ENCODE measurements at regions of chr15 and their contacts with region 1.

Region 1: DNA sequence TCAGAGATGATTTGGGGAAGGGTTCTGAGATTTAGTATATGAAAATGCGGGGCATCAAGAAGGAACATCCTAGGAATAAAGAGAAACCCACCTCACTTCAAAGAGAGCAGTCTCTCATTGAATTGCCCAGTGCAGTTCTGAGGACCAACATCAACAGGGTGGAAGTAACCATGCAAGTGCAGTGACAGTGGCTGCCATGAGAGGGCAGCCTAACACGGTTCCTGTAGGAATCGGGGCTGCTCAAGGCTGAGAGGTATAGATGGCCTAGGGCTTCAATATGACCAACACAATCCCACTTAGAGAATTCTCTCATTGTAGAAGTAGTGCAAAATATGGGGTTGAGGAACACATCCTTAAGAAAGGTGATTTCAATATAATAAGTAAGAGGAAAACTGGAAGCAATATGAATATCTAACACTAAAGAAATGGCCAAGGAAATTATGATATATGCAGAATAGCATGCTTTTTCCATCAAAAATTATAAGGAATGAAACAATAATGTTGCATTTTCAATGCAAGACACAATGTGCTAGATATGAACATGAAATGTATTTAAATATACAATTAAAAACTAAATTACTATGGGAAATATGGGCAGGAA is 51.1 kb upstream of the ARRDC4 start:
- DNase-seq: peak; percentile 37 to 51
- H3K4me3 ChIP-seq: no peak overlapping the region
- H3K27ac ChIP-seq: no peak overlapping the region
- H3K4me1 ChIP-seq: no peaks in the 10 kb centered on the region
- H3K27me3 ChIP-seq: peaks cover 56% of the 10 kb centered on the region
- CTCF ChIP-seq: peak; percentile 90

Region 2: GRCh38 chr15:98085003-98085639 is 175.7 kb after region 1 on chr15:
- CTCF ChIA-PET with region 1: no interaction called
- POLR2A ChIA-PET with region 1: no interaction called
- intact Hi-C with region 1: loop called (anchors 1 kb)
- DNase-seq: peak in 1 of 2 experiments; percentile 60
- H3K4me3 ChIP-seq: no peak overlapping the region
- H3K27ac ChIP-seq: no peak overlapping the region
- H3K4me1 ChIP-seq: no peaks in the 10 kb centered on the region
- H3K27me3 ChIP-seq: no peaks in the 10 kb centered on the region
- CTCF ChIP-seq: peak; percentile 75

Region 3: GRCh38 chr15:98421419-98422129 is 512.2 kb after region 1 on chr15:
- CTCF ChIA-PET with region 1: no interaction called
- POLR2A ChIA-PET with region 1: no interaction called
- intact Hi-C with region 1: loop called (anchors 5 kb)
- DNase-seq: peak in 1 of 2 experiments; percentile 55
- H3K4me3 ChIP-seq: no peak overlapping the region
- H3K27ac ChIP-seq: no peak overlapping the region
- H3K4me1 ChIP-seq: no peaks in the 10 kb centered on the region
- H3K27me3 ChIP-seq: peaks cover 79% of the 10 kb centered on the region
- CTCF ChIP-seq: peak; percentile 96